GM12878 (cell line): ENCODE measurements at regions of chr16 and their contacts with region 1.

Region 1: GRCh38 chr16:67159593-67160406 is at the starts of genes FBXL8 and TRADD:
- DNase-seq: no peak
- ATAC-seq: peak; percentile 75
- H3K4me3 ChIP-seq: peak within 1 kb of the TSS; percentile 95
- H3K27ac ChIP-seq: peak within 1 kb of the TSS; percentile 89
- H3K4me1 ChIP-seq: peaks cover 50% of the 10 kb centered on the region
- H3K27me3 ChIP-seq: peaks cover 0 to 7% of the 10 kb centered on the region in 2 experiments; a peak in 1 of 4 replicates
- CTCF ChIP-seq: peak; percentile 37 to 61 (median 50)
- EP300 ChIP-seq: no peak
- POLR2A ChIP-seq: peak; percentile 86
- RAD21 ChIP-seq: no peak
- polyA plus RNA-seq, gene FBXL8: not detected
- polyA plus RNA-seq, gene TRADD: 1.7 to 3.5 TPM

Region 2: DNA sequence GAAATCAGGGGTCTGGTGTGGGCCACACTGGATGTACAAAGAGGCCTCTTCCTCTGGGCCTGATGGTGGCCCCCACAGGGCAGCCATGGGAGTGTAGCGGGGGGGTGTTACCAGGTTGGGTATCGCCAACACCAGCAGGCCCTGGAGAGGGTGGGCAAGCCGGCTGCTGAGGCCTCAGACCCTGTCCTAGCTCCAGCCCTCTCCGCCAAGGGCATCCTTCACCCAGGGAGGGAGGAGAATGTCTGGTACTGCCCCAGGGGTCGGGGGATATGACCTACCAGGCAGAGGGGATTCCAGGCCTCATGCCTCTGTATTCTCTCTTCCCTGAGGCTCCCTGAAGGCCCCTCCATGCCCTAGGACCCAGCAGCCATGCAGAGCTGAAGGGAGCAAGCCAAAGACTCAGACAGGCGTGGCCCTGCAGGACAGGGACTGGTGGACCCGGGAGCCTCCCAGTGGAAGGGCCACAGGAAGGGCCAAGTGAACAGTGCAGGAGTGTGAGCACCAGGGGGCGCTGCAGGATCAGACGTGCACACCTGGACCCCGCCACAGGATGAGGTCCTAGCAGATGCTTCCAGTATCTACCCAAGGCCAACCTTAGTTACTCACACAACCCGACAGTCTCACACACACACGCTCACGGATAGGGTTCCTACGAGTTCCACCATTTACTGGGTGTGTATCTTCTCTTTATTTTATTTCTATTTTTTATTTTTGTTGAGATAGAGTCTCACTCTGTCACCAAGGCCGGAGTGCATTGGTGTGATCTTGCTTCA is 182.3 kb before region 1 on chr16:
- CTCF ChIA-PET with region 1: interaction called, 10 read pairs
- POLR2A ChIA-PET with region 1: no interaction called
- RAD21 ChIA-PET with region 1: interaction called, 6 read pairs
- SMC1A ChIA-PET with region 1: interaction called, 6 read pairs
- in situ Hi-C with region 1: loop called (anchors 10 kb)
- intact Hi-C with region 1: loop called (anchors 1 kb)
- DNase-seq: peak; percentile 21
- ATAC-seq: peak; percentile 99
- H3K4me3 ChIP-seq: no peak overlapping the region
- H3K27ac ChIP-seq: no peak overlapping the region
- H3K4me1 ChIP-seq: peaks cover 3% of the 10 kb centered on the region; the same call in 1 of the 2 replicates
- H3K27me3 ChIP-seq: no peaks in the 10 kb centered on the region
- CTCF ChIP-seq: peak; percentile 92 to 99 (median 95); a peak in 5 of 6 replicates
- EP300 ChIP-seq: no peak
- POLR2A ChIP-seq: no peak
- RAD21 ChIP-seq: peak; percentile 92

Region 3: GRCh38 chr16:67104061-67104460 is 55.7 kb before region 1 on chr16:
- CTCF ChIA-PET with region 1: interaction called, 98 read pairs
- POLR2A ChIA-PET with region 1: interaction called, 5 read pairs
- RAD21 ChIA-PET with region 1: interaction called, 22 read pairs
- SMC1A ChIA-PET with region 1: interaction called, 8 read pairs
- in situ Hi-C with region 1: no loop called
- intact Hi-C with region 1: loop called (anchors 5 kb)
- DNase-seq: no peak
- ATAC-seq: peak; percentile 70
- H3K4me3 ChIP-seq: no peak overlapping the region
- H3K27ac ChIP-seq: no peak overlapping the region
- H3K4me1 ChIP-seq: peaks cover 9% of the 10 kb centered on the region
- H3K27me3 ChIP-seq: no peaks in the 10 kb centered on the region
- CTCF ChIP-seq: peak in 2 of 3 experiments; percentile 25 to 32; a peak in 2 of 6 replicates
- EP300 ChIP-seq: no peak
- POLR2A ChIP-seq: no peak
- RAD21 ChIP-seq: no peak

Region 4: DNA sequence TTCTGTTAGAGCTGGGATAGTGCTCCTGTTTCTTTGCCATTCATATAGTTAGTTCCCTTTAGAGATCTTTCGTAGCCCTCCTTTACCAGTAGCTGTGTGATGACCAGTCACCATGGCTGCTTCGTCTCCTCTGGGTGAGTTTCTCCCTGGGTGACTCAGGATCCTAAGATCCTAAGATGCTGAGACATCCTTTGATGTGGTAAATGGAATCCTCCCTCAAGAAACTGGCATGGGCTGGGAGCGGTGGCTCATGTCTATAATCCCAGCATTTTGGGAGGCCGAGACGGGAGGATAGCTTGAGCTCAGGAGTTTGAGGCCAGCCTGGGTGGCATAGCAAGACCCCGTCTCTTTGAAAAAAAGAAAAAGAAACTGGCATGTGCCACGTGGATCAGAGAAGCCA is 44.2 kb before region 1 on chr16:
- CTCF ChIA-PET with region 1: interaction called, 12 read pairs
- POLR2A ChIA-PET with region 1: interaction called, 12 read pairs
- RAD21 ChIA-PET with region 1: interaction called, 5 read pairs
- SMC1A ChIA-PET with region 1: no interaction called
- in situ Hi-C with region 1: no loop called
- intact Hi-C with region 1: no loop called
- DNase-seq: no peak
- ATAC-seq: no peak
- H3K4me3 ChIP-seq: no peak overlapping the region
- H3K27ac ChIP-seq: no peak overlapping the region
- H3K4me1 ChIP-seq: peaks cover 3% of the 10 kb centered on the region; the same call in 1 of the 2 replicates
- H3K27me3 ChIP-seq: no peaks in the 10 kb centered on the region
- CTCF ChIP-seq: no peak
- EP300 ChIP-seq: no peak
- POLR2A ChIP-seq: no peak
- RAD21 ChIP-seq: no peak

Region 5: DNA sequence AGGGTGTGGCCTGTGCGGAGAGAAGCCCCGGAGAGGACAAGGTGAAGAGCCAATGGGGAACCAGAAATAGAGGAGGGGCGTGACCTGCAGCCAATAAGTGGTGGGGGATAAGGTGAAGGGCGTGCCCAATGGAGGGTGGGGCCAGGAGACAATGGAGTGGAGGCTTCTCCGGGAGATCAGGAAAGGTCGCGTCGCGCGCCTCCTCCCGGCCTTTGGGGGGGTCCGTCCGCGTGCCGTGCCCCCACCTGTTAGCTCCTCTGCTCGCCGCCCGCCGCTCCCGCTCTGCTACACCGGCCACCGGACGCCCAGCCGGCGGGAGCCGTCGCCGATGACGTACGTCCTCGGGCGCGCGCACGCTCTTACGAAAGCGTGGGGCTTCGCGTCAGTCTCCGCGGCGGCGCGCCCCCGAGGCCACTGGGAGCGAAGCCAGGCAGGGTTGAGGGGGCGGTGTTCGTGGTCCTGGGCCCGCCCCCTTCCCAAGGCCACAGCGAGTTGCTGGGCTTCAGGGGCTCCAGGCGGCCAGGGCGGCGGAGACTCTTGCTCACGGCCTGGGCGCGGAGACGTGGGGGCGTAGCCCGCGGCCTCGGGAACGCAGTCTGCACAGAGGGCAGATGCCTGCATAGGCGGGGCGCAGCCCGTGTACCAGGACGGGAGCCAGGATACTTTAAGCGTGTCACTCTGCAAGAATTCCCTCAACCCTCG is 24.0 kb after region 1 on chr16 and contains the start of gene MATCAP1:
- CTCF ChIA-PET with region 1: interaction called, 28 read pairs
- POLR2A ChIA-PET with region 1: interaction called, 6 read pairs
- RAD21 ChIA-PET with region 1: interaction called, 7 read pairs
- SMC1A ChIA-PET with region 1: interaction called, 4 read pairs
- in situ Hi-C with region 1: no loop called
- intact Hi-C with region 1: no loop called
- DNase-seq: peak; percentile 91
- ATAC-seq: peak; percentile 96
- H3K4me3 ChIP-seq: peak within 1 kb of the TSS; percentile 76
- H3K27ac ChIP-seq: peak within 1 kb of the TSS; percentile 84
- H3K4me1 ChIP-seq: peaks cover 4% of the 10 kb centered on the region
- H3K27me3 ChIP-seq: peaks cover 0 to 3% of the 10 kb centered on the region in 2 experiments; a peak in 2 of 4 replicates
- CTCF ChIP-seq: no peak
- EP300 ChIP-seq: no peak
- POLR2A ChIP-seq: peak; percentile 76
- RAD21 ChIP-seq: no peak
- polyA plus RNA-seq, gene MATCAP1: 2.8 to 6.6 TPM

Region 6: DNA sequence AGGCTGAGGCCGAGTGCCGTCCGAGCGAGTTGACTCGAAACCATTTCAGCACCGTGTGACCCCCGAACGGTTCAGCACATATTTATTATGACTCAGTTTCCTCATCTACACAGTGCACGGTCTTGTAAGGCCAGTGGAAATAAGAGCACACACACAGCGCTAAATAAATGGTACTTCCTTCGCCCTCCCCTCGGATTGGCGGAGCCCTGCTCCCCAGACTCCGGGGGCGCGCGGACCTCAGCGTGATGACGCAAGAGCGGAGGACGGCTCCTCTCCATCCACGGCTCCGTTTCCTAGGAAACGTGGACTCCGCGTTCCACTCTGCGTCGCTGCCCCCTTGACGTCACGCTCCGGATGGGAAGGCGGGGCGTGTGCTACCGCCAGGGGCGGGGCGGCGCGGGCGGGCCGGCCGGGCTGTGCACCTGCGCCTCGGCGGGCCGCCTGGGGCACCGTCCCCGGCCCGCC is 500.8 kb after region 1 on chr16 and contains the start of gene PARD6A:
- CTCF ChIA-PET with region 1: no interaction called
- POLR2A ChIA-PET with region 1: no interaction called
- RAD21 ChIA-PET with region 1: no interaction called
- SMC1A ChIA-PET with region 1: no interaction called
- in situ Hi-C with region 1: no loop called
- intact Hi-C with region 1: loop called (anchors 5 kb)
- DNase-seq: peak; percentile 87
- ATAC-seq: peak; percentile 84
- H3K4me3 ChIP-seq: peak within 1 kb of the TSS; percentile 92
- H3K27ac ChIP-seq: peak within 1 kb of the TSS; percentile 80
- H3K4me1 ChIP-seq: peaks cover 10% of the 10 kb centered on the region
- H3K27me3 ChIP-seq: no peaks in the 10 kb centered on the region
- CTCF ChIP-seq: no peak
- EP300 ChIP-seq: no peak
- POLR2A ChIP-seq: no peak
- RAD21 ChIP-seq: no peak
- polyA plus RNA-seq, gene PARD6A: 0.42 to 0.62 TPM